CD4-positive, alpha-beta memory T cell (primary cell): ENCODE measurements at regions of chr15 and their contacts with region 1.

Region 1: GRCh38 chr15:79923515-79924395 is 26.9 kb upstream of the MTHFS start:
- DNase-seq: peak; percentile 97 to 100 (median 99)
- H3K4me3 ChIP-seq: peak overlapping the region; percentile 88 to 91
- H3K4me3 Mint-ChIP-seq: peak overlapping the region; percentile 90 to 94 (median 92)
- H3K27ac ChIP-seq: peak overlapping the region; percentile 85
- H3K27ac Mint-ChIP-seq: peak overlapping the region; percentile 95 to 99 (median 97)
- H3K4me1 ChIP-seq: peaks cover 20% of the 10 kb centered on the region
- H3K4me1 Mint-ChIP-seq: peaks cover 10 to 31% (median 22%) of the 10 kb centered on the region in 4 donors
- H3K27me3 ChIP-seq: no peaks in the 10 kb centered on the region
- H3K27me3 Mint-ChIP-seq: no peaks in the 10 kb centered on the region

Region 2: DNA sequence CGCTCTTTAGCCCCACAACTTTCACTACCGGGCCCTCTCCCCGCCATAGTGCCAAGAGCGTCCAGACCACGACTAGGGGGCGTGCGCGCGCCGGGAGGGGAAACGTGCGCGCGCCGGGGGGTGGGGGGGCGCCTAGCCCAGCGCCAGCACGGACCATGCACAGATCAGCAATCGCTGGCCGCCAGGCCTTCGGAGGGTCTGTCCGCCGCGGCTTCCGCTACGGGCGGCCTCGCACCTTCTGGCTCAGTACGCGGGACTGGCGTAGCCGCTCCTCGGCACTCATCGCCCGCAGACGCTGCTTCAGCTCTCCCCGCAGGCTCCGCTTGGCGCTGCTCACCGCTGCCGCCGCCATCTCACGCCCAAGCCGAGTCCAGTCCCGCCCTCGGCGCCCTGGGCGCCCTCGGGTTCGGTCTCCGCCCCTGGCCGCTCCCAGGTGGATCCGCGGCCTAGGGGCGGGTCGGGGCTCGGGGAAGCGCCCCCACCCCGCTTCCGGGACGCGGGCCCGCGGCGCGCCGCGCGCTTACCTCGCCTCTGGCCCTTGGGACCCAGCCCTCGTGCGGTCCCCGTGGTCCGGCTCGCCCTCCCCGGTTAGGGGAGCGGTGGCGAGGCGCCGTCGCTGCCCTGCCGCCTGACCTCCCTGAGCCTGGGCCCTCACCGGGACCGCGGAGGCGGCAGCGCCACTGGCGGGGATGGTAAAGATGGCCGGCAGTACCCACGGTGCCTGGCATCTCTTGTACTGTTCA is 26.9 kb before region 1 on chr15 and contains the start of gene MTHFS:
- CTCF ChIA-PET with region 1: interaction called, 32 read pairs
- POLR2A ChIA-PET with region 1: interaction called, 153 read pairs
- intact Hi-C with region 1: loop called (anchors 1 kb)
- DNase-seq: peak; percentile 81 to 87 (median 85)
- H3K4me3 ChIP-seq: peak within 1 kb of the TSS; percentile 74 to 84
- H3K4me3 Mint-ChIP-seq: peak within 1 kb of the TSS; percentile 96 to 100 (median 100)
- H3K27ac ChIP-seq: peak within 1 kb of the TSS; percentile 88
- H3K27ac Mint-ChIP-seq: peak within 1 kb of the TSS; percentile 97 to 100 (median 99)
- H3K4me1 ChIP-seq: peaks cover 32% of the 10 kb centered on the region
- H3K4me1 Mint-ChIP-seq: peaks cover 28 to 45% (median 36%) of the 10 kb centered on the region in 4 donors
- H3K27me3 ChIP-seq: no peaks in the 10 kb centered on the region
- H3K27me3 Mint-ChIP-seq: no peaks in the 10 kb centered on the region
- total RNA-seq, gene MTHFS: 21.3 to 25.6 TPM

Region 3: GRCh38 chr15:79901958-79902357 is 21.8 kb before region 1 on chr15:
- CTCF ChIA-PET with region 1: interaction called, 32 read pairs
- POLR2A ChIA-PET with region 1: interaction called, 153 read pairs
- intact Hi-C with region 1: loop called (anchors 1 kb)
- DNase-seq: no peak
- H3K4me3 ChIP-seq: no peak overlapping the region
- H3K4me3 Mint-ChIP-seq: no peak overlapping the region
- H3K27ac ChIP-seq: no peak overlapping the region
- H3K27ac Mint-ChIP-seq: peak overlapping the region in 1 of 7 donors; percentile 15
- H3K4me1 ChIP-seq: peaks cover 10% of the 10 kb centered on the region
- H3K4me1 Mint-ChIP-seq: peaks cover 9 to 15% (median 13%) of the 10 kb centered on the region in 4 donors
- H3K27me3 ChIP-seq: no peaks in the 10 kb centered on the region
- H3K27me3 Mint-ChIP-seq: no peaks in the 10 kb centered on the region

Region 4: DNA sequence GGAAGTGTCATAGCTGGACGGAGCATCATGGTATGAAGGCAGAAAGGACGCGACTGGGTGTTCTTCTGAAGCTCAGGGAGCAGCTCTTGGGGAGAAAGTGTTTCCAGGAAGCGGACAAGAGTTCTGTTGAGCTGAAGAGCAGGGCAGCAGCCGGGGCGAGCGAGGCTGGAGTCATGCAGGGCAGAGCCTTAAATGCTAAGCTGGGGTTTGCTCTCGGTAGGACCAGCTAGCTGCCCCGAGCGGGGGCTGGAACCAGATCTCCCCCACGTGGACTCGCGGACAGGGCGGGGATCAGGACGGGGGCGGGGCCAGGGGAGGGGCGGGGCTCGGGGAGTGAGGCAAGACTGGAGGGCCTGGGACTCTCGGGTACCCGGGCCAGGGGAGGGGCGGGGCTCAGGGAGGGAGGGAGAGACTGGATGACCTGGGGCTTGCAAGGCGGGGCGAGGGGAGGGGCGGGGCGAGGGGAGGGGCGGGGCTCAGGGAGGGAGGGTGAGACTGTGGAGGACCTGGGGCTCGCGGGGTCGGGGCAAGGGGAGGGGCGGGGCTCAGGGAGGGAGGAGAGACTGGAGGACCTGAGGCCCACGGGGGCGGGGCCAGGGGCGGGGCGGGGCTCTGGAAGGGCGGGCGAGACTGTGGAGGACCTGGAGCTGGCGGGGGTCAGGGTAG is 228.6 kb after region 1 on chr15:
- CTCF ChIA-PET with region 1: no interaction called
- POLR2A ChIA-PET with region 1: interaction called, 11 read pairs
- intact Hi-C with region 1: loop called (anchors 1 kb)
- DNase-seq: peak; percentile 76 to 96 (median 80)
- H3K4me3 ChIP-seq: peak overlapping the region in 1 of 2 donors; percentile 33
- H3K4me3 Mint-ChIP-seq: peak overlapping the region; percentile 79 to 94 (median 86)
- H3K27ac ChIP-seq: peak overlapping the region; percentile 56
- H3K27ac Mint-ChIP-seq: peak overlapping the region; percentile 68 to 93 (median 88)
- H3K4me1 ChIP-seq: peaks cover 14% of the 10 kb centered on the region
- H3K4me1 Mint-ChIP-seq: peaks cover 16 to 23% (median 20%) of the 10 kb centered on the region in 4 donors
- H3K27me3 ChIP-seq: no peaks in the 10 kb centered on the region
- H3K27me3 Mint-ChIP-seq: no peaks in the 10 kb centered on the region